Activated B cell treated with CpG ODN at 0.5 μM for 24 hours (primary cell): ENCODE measurements at regions of chr16 and their contacts with region 1.

Region 1: DNA sequence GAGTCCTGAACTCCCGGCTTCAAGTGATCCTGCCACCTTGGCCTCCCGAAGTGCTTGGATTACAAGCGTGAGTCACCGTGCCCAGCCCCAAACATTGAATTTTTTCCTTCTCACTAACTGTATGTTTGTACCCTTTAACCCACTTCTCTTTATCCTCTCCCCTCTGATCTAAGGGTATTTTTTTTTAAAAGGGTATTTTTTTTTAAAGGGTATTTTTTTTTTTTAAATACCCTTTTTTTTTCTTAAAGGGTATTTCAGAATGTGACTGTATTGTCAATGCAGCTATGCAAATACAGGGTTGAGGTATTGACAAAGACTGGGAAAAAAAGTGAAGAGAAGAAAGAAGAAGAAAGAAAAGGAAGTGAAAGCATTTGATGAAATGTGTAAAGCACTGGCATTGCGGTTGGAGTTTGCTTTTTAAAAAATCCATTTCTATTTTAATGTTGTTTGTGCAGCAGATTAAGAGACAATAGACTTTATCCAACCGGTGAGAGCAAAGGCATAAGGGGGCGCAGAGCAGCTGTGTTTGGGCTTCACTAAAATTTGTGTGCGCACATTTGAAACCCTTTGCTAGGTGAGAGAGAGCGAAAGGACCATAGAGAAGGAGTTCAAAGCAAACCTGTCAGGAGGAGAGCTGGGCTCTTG is 42.4 kb downstream of the SYT17 start:
- DNase-seq: no peak
- ATAC-seq: peak; percentile 69
- H3K4me3 Mint-ChIP-seq: peak overlapping the region; percentile 73
- H3K27ac Mint-ChIP-seq: peak overlapping the region; percentile 98
- H3K4me1 Mint-ChIP-seq: peaks cover 74% of the 10 kb centered on the region
- H3K27me3 Mint-ChIP-seq: no peaks in the 10 kb centered on the region
- CTCF ChIP-seq: no peak

Region 2: DNA sequence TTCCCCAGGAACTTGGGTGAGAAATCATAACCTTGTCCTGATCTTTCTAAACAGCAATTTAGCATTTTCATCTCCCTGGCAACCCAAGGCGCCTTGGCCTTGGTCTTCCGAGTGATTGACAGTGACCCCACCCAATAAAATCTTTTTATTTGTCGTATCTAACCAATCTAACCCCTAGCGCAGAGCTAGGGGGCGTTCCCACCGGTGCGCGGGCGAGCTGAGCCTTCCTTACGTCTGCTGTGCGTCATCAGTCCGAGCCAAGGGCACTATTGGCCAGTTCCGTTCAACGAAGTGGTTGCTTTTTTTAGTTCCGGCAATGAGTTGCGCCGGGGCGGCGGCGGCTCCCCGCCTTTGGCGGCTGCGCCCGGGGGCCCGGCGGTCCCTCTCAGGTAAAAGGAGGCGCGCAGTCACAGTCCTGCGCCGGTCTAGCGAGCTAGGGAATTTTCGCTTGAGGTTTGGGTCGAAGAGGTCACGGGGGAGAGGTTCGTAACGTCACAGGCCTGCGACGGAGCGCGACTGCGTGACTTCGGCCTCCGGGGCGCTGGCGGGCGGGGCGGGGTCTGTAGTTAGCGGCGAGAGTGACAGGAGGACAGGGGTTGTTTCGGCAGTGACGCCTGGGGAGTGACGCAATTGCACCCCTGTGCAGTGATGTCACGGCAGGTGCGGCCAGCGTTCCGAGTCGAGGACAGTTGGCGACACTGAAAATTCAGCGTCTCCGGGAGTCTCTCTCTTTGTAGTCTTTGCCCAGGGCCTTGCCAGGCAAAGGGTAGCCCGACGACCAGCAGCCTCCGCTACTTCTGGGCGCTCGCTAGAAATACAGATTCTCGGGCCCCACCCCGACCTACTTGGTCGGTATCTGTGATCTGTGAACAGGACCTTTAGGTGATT is 142.8 kb before region 1 on chr16 and contains the start of gene COQ7:
- CTCF ChIA-PET with region 1: no interaction called
- POLR2A ChIA-PET with region 1: interaction called, 7 read pairs
- intact Hi-C with region 1: loop called (anchors 1 kb)
- DNase-seq: peak; percentile 95
- ATAC-seq: peak; percentile 90
- H3K4me3 Mint-ChIP-seq: peak within 1 kb of the TSS; percentile 93
- H3K27ac Mint-ChIP-seq: peak within 1 kb of the TSS; percentile 97
- H3K4me1 Mint-ChIP-seq: peaks cover 17% of the 10 kb centered on the region
- H3K27me3 Mint-ChIP-seq: peaks cover 4% of the 10 kb centered on the region
- CTCF ChIP-seq: no peak
- total RNA-seq, gene COQ7: 13.6 and 17.5 TPM in 2 replicates

Region 3: GRCh38 chr16:19127674-19128131 is 82.7 kb before region 1 on chr16:
- CTCF ChIA-PET with region 1: no interaction called
- POLR2A ChIA-PET with region 1: no interaction called
- intact Hi-C with region 1: no loop called
- DNase-seq: no peak
- ATAC-seq: no peak
- H3K4me3 Mint-ChIP-seq: no peak overlapping the region
- H3K27ac Mint-ChIP-seq: peak overlapping the region; percentile 26
- H3K4me1 Mint-ChIP-seq: peaks cover 36% of the 10 kb centered on the region
- H3K27me3 Mint-ChIP-seq: no peaks in the 10 kb centered on the region
- CTCF ChIP-seq: no peak

Region 4: DNA sequence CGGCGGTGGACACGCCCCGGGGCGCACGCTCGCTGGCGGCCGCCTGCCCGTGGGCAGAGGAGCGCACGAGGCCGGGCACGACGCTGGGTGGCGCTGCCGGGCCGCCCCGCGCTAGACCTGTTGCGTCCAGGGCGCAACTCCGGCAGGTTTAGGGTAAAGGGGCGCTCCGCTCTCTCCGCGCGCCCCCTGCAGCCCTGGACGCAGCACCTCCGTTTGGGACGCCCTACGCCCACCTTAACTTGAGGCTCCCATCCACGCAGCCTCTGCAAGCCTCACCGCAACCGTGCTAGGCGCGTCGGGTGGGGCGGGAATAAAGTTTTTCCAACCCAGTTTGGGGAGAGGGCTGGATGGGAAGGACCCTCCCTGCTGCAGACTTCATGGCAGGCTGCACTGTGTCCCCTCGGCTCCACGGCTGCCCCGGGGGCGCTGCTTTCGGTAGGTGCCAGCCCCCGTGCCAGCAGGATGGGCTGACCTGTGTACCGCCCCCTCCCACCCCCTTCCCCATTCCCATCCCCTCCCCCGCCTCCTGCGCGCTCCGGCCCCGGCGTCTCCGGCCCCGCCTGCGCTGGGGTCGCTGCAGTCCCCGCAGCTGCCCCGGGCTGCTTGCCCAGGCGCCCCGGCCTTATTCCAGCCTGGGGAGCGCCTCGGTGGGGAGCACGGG is 42.6 kb before region 1 on chr16 and contains the start of gene SYT17:
- CTCF ChIA-PET with region 1: no interaction called
- POLR2A ChIA-PET with region 1: interaction called, 6 read pairs
- intact Hi-C with region 1: loop called (anchors 1 kb)
- DNase-seq: peak; percentile 69
- ATAC-seq: peak; percentile 92
- H3K4me3 Mint-ChIP-seq: peak within 1 kb of the TSS; percentile 82
- H3K27ac Mint-ChIP-seq: no peak within 1 kb of the TSS
- H3K4me1 Mint-ChIP-seq: peaks cover 24% of the 10 kb centered on the region
- H3K27me3 Mint-ChIP-seq: no peaks in the 10 kb centered on the region
- CTCF ChIP-seq: no peak
- total RNA-seq, gene SYT17: 21.2 and 25.4 TPM in 2 replicates

Region 5: DNA sequence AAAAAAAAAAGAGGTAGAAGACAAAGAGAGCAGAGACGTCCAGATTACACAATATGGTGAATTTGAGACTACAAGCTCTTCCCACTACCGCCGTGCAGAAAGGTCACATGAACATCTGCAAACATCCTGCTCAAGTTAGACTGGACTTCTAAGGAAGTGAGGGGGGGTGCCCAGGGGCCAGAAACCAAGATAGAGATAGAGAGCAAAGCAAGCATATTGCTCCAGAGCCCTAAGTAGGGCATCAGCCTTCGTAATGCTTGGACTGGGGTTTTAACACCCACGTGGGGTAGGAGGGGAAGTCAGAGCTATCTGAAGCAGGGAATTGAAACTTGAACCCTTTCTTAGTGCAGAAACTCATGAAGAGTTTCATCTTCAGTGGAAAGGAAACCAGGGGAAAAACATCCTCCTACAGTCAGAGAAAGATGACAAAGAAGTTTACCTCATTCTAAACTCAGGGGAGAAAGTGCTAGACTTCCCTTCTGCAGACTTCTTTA is 83.8 kb after region 1 on chr16:
- CTCF ChIA-PET with region 1: no interaction called
- POLR2A ChIA-PET with region 1: interaction called, 10 read pairs
- intact Hi-C with region 1: loop called (anchors 1 kb)
- DNase-seq: peak; percentile 18
- ATAC-seq: peak; percentile 88
- H3K4me3 Mint-ChIP-seq: peak overlapping the region; percentile 42
- H3K27ac Mint-ChIP-seq: peak overlapping the region; percentile 84
- H3K4me1 Mint-ChIP-seq: peaks cover 29% of the 10 kb centered on the region
- H3K27me3 Mint-ChIP-seq: peaks cover 7% of the 10 kb centered on the region
- CTCF ChIP-seq: no peak

Region 6: DNA sequence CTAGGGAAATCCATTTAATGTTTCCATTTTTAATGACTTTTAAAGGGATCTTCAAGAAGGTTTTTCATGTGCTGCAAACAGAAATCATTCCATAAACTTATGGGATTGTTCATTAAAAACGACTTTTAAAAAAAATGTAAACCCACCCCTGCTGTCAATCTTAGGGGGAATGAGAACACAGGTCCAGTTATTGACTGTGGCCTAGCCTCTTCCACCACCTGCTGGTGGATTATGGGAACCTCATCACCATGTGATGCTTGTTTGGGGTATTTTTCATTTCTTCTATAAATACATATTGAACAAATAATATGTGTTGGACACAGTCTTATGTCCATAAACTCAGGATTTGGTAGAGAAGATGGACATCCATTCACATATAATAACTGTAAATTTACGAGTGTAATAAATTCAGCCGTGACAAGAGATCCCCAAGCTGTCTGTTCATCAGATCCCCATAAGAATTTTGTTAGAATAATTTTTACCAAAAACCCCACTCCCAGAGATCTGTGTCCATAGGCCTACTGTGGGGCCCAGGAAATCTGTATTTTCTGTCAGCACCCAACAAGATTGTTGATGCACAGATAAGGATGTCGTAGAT is 165.3 kb after region 1 on chr16:
- CTCF ChIA-PET with region 1: no interaction called
- POLR2A ChIA-PET with region 1: no interaction called
- intact Hi-C with region 1: loop called (anchors 2 kb)
- DNase-seq: no peak
- ATAC-seq: peak; percentile 83
- H3K4me3 Mint-ChIP-seq: no peak overlapping the region
- H3K27ac Mint-ChIP-seq: no peak overlapping the region
- H3K4me1 Mint-ChIP-seq: no peaks in the 10 kb centered on the region
- H3K27me3 Mint-ChIP-seq: no peaks in the 10 kb centered on the region
- CTCF ChIP-seq: peak; percentile 97

Region 7: GRCh38 chr16:19607616-19608280 is 397.3 kb after region 1 on chr16:
- CTCF ChIA-PET with region 1: no interaction called
- POLR2A ChIA-PET with region 1: no interaction called
- intact Hi-C with region 1: no loop called
- DNase-seq: no peak
- ATAC-seq: no peak
- H3K4me3 Mint-ChIP-seq: no peak overlapping the region
- H3K27ac Mint-ChIP-seq: no peak overlapping the region
- H3K4me1 Mint-ChIP-seq: no peaks in the 10 kb centered on the region
- H3K27me3 Mint-ChIP-seq: no peaks in the 10 kb centered on the region
- CTCF ChIP-seq: no peak